ENCODE measurements at regions of chr20 and their contacts with region 1.

Region 1: GRCh38 chr20:32743237-32744112 is at the start of gene COMMD7:
- DNase-seq: peak; percentile 67
- ATAC-seq: peak; percentile 81
- H3K4me3 Mint-ChIP-seq: peak within 1 kb of the TSS; percentile 94
- H3K27ac Mint-ChIP-seq: peak within 1 kb of the TSS; percentile 89
- H3K4me1 Mint-ChIP-seq: peaks cover 29% of the 10 kb centered on the region
- H3K27me3 Mint-ChIP-seq: no peaks in the 10 kb centered on the region
- CTCF ChIP-seq: no peak
- total RNA-seq, gene COMMD7: 35.5 and 37.9 TPM in 2 replicates

Region 2: GRCh38 chr20:32762149-32762753 is 18.8 kb after region 1 on chr20 and contains the start of gene DNMT3B:
- CTCF ChIA-PET with region 1: interaction called, 9 read pairs
- POLR2A ChIA-PET with region 1: interaction called, 23 read pairs
- intact Hi-C with region 1: loop called (anchors 1 kb)
- DNase-seq: peak; percentile 81
- ATAC-seq: peak; percentile 86
- H3K4me3 Mint-ChIP-seq: peak within 1 kb of the TSS; percentile 86
- H3K27ac Mint-ChIP-seq: no peak within 1 kb of the TSS
- H3K4me1 Mint-ChIP-seq: peaks cover 17% of the 10 kb centered on the region
- H3K27me3 Mint-ChIP-seq: peaks cover 2% of the 10 kb centered on the region
- CTCF ChIP-seq: no peak
- total RNA-seq, gene DNMT3B: 0.20 and 0.32 TPM in 2 replicates

Region 3: GRCh38 chr20:32819992-32820710 is 76.7 kb after region 1 on chr20:
- CTCF ChIA-PET with region 1: no interaction called
- POLR2A ChIA-PET with region 1: interaction called, 4 read pairs
- intact Hi-C with region 1: loop called (anchors 5 kb)
- DNase-seq: no peak
- ATAC-seq: peak; percentile 74
- H3K4me3 Mint-ChIP-seq: peak overlapping the region; percentile 96
- H3K27ac Mint-ChIP-seq: peak overlapping the region; percentile 91
- H3K4me1 Mint-ChIP-seq: peaks cover 44% of the 10 kb centered on the region
- H3K27me3 Mint-ChIP-seq: no peaks in the 10 kb centered on the region
- CTCF ChIP-seq: no peak

Region 4: DNA sequence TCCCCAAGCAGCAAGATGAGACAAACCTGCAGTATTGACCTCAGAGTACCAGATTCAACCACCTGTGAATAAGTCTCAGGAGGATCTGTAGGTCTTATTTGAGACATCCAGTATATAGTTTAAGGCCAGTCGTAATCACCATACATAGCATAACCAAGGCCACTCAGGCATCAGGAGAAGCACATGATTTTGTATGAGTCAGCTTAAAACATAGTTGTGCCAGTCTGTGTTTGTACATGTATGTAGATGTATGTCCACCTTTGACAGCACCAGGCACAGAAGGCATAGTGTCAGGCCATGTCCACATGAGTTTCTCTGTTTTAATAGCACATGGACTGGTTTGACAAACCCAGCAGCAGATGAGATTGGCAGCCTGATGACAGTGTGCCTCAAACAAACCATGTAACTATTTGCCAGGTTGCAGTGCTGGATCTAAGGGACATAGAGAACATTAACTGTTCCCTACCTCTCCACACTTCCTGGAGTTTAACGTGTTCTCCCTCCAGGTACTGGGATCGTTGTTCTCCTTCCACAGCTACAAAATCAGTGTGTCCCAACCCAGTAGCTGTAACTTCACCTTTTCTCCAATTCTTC is 1489.1 kb after region 1 on chr20:
- CTCF ChIA-PET with region 1: no interaction called
- POLR2A ChIA-PET with region 1: no interaction called
- intact Hi-C with region 1: no loop called
- DNase-seq: no peak
- ATAC-seq: no peak
- H3K4me3 Mint-ChIP-seq: no peak overlapping the region
- H3K27ac Mint-ChIP-seq: no peak overlapping the region
- H3K4me1 Mint-ChIP-seq: no peaks in the 10 kb centered on the region
- H3K27me3 Mint-ChIP-seq: peaks cover 1% of the 10 kb centered on the region
- CTCF ChIP-seq: no peak